ENCODE measurements at regions of chr1 and their contacts with region 1.

Region 1: DNA sequence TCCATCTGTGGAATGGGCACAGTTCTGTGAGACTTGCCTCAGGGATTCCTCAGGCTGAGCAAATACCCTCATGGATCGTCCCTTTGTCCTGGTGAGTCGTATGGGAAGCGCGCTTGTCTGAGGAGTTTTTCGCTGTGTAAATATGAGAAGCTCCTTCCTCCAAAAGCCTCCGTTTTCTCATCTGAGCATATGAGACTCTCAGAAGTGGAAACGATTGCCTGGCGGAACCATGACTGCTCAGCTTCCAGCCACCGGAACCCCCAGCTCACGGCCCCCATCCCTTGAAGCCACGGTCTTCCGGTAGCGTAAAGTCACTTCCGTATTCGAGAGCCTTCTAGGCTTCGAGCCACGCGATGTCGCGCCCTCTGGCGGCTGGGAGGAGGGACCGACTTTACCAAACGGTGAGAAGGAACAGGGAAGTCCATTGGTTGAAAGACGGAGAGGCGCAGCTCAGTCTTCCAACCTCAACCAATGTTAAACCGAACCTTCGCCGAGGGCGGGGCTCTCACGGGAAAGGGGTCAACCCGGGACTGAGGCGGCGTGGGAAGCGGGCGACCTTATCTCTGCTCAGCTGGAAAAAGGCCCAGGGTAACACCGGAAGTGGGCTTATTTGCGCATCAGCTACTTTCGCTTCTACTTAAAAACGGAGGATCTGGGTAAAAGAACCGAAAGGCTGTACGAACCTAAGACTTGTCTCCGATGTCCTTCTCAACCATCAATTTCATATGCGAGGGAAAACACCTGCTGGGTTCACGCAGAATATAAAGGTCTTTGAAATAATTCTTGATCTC is 46.2 kb downstream of the AZIN2 start:
- DNase-seq: peak; percentile 97 to 99
- ATAC-seq: peak; percentile 96 to 98
- H3K4me3 ChIP-seq: peak overlapping the region; percentile 68 to 86 (median 76)
- H3K27ac ChIP-seq: peak overlapping the region; percentile 85 to 91 (median 86)
- H3K4me1 ChIP-seq: peaks cover 8 to 26% of the 10 kb centered on the region in 2 donors
- H3K27me3 ChIP-seq: no peaks in the 10 kb centered on the region
- CTCF ChIP-seq: peak; percentile 71 to 93 (median 91)
- POLR2A ChIP-seq: peak; percentile 29 to 39

Region 2: GRCh38 chr1:32372149-32372756 is 754.9 kb before region 1 on chr1:
- in situ Hi-C with region 1: no loop called
- intact Hi-C with region 1: no loop called
- DNase-seq: no peak
- ATAC-seq: no peak
- H3K4me3 ChIP-seq: no peak overlapping the region
- H3K27ac ChIP-seq: no peak overlapping the region
- H3K4me1 ChIP-seq: no peaks in the 10 kb centered on the region
- H3K27me3 ChIP-seq: no peaks in the 10 kb centered on the region
- CTCF ChIP-seq: no peak
- POLR2A ChIP-seq: no peak

Region 3: GRCh38 chr1:33094971-33095604 is 32.1 kb before region 1 on chr1:
- in situ Hi-C with region 1: no loop called
- intact Hi-C with region 1: loop called (anchors 2 kb)
- DNase-seq: peak in 1 of 2 donors; percentile 46
- ATAC-seq: peak; percentile 26 to 62
- H3K4me3 ChIP-seq: no peak overlapping the region
- H3K27ac ChIP-seq: no peak overlapping the region
- H3K4me1 ChIP-seq: peaks cover 6 to 9% of the 10 kb centered on the region in 2 donors
- H3K27me3 ChIP-seq: no peaks in the 10 kb centered on the region
- CTCF ChIP-seq: peak; percentile 82 to 98 (median 88)
- POLR2A ChIP-seq: no peak

Region 4: DNA sequence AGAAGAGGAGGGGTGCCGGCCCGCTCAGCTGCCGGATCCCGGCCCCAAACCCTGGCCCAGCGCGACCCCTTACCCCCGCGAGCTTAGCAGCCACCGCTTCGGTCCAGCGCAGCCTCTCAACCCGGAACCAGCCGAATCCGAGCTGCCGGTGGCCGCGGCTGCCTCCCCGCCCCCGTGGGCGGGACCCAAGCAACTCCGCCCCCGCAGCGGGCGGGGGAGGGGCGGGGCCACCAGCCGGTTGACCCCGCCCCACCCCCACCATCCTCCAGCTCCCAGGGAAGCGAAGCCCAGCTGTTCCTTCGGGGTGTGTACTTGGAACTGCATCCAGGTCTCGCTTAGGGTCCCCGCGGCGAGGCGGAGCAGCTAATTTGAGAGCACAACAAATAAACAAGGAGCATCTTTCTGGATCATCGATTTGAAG is 54.7 kb after region 1 on chr1 and contains the start of gene TRIM62:
- in situ Hi-C with region 1: no loop called
- intact Hi-C with region 1: loop called (anchors 1 kb)
- DNase-seq: peak; percentile 76 to 85
- ATAC-seq: peak; percentile 73 to 80
- H3K4me3 ChIP-seq: peak within 1 kb of the TSS; percentile 80 to 89 (median 86)
- H3K27ac ChIP-seq: peak within 1 kb of the TSS; percentile 81 to 86 (median 84)
- H3K4me1 ChIP-seq: peaks cover 20 to 21% of the 10 kb centered on the region in 2 donors
- H3K27me3 ChIP-seq: no peaks in the 10 kb centered on the region
- CTCF ChIP-seq: no peak
- POLR2A ChIP-seq: peak; percentile 81 to 83
- total RNA-seq, gene TRIM62: 3.3 to 10.8 (median 7.4) TPM

Region 5: GRCh38 chr1:33460947-33461629 is 333.9 kb after region 1 on chr1:
- in situ Hi-C with region 1: loop called in 1 of 4 experiments (anchors 10 kb)
- intact Hi-C with region 1: no loop called
- DNase-seq: peak; percentile 47 to 49
- ATAC-seq: peak in 1 of 2 donors; percentile 3
- H3K4me3 ChIP-seq: no peak overlapping the region
- H3K27ac ChIP-seq: peak overlapping the region; percentile 73 to 92 (median 84)
- H3K4me1 ChIP-seq: peaks cover 34 to 45% of the 10 kb centered on the region in 2 donors
- H3K27me3 ChIP-seq: no peaks in the 10 kb centered on the region
- CTCF ChIP-seq: no peak
- POLR2A ChIP-seq: no peak

Measured in gastrocnemius medialis (tissue), 4 donors.